Sciatic nerve (tissue), 2 donors: ENCODE measurements at regions of chr5 and their contacts with region 1.

Region 1: DNA sequence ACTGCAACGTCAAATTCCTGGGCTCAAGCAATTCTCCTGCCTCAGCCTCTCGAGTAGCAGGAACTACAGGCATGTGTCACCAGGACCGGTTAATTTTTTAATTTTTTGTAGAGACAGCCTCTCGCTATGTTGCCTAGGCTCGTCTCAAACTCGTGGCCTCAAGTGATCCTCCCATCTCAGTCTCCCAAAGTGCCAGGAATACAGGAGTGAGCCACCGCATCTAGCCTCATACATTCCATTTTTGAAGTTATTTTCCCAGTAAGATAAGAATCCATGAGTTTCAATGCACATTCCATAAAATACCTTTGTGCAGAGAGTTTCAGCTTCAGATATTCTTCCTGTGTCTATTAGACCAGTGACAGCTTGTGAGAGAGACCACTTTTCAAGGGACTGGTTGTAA is 70.4 kb downstream of the SKIC3 start:
- DNase-seq: no peak
- ATAC-seq: no peak

Region 2: DNA sequence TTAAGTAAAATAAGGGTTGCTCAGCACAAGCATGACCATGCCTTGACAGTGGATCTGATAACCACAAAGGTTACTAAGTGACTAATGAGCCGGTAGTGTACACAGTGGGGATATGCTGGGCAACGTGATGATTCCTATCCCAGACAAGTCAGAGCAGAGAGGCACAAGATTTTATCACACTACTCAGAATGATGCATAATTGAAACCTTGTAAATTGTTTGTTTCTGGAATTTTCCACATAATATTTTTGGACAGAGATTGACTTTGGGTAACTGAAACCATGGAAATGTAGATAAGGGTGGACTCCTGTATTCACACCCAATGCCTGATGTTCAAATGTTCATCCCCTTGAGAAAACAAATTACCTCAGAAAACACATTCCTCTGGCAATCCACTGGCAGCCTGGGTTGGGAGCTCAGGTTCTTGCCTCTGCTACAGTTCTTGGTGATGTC is 1339.5 kb after region 1 on chr5:
- intact Hi-C with region 1: loop called (anchors 5 kb)
- DNase-seq: no peak
- ATAC-seq: no peak